Transverse colon (tissue), 4 donors: ENCODE measurements at regions of chr15 and their contacts with region 1.

Region 1: DNA sequence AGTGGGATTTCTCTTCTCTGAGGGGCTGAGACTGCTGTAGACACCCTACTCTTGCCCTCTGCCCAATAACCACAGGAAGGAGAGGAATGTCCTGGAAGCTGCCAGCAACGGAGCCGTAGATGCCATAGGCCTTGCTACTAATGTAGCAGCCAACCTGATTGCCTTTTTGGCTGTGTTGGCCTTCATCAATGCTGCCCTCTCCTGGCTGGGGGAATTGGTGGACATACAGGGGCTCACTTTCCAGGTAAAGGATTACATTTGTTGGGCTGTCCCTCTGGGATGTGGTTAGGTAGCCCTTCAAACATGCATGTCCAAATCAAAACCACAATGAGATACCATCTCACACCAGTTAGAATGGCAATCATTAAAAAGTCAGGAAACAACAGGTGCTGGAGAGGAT is 16.1 kb downstream of the SLC28A2 start:
- DNase-seq: peak; percentile 54
- H3K4me3 ChIP-seq: no peak overlapping the region
- H3K27ac ChIP-seq: no peak overlapping the region
- H3K4me1 ChIP-seq: no peaks in the 10 kb centered on the region
- H3K27me3 ChIP-seq: no peaks in the 10 kb centered on the region
- CTCF ChIP-seq: peak; percentile 8 to 46 (median 19)
- EP300 ChIP-seq: no peak
- POLR2A ChIP-seq: no peak

Region 2: GRCh38 chr15:45166834-45167630 is 101.1 kb before region 1 on chr15:
- in situ Hi-C with region 1: no loop called
- intact Hi-C with region 1: no loop called
- DNase-seq: peak; percentile 89
- H3K4me3 ChIP-seq: peak overlapping the region; percentile 47 to 78 (median 58)
- H3K27ac ChIP-seq: peak overlapping the region; percentile 94 to 99 (median 96)
- H3K4me1 ChIP-seq: peaks cover 10 to 21% (median 12%) of the 10 kb centered on the region in 4 donors
- H3K27me3 ChIP-seq: no peaks in the 10 kb centered on the region
- CTCF ChIP-seq: peak; percentile 68 to 89 (median 74)
- EP300 ChIP-seq: no peak
- POLR2A ChIP-seq: peak; percentile 67

Region 3: GRCh38 chr15:45212493-45212892 is 55.6 kb before region 1 on chr15:
- in situ Hi-C with region 1: loop called in 1 of 4 experiments (anchors 10 kb)
- intact Hi-C with region 1: no loop called
- DNase-seq: no peak
- H3K4me3 ChIP-seq: no peak overlapping the region
- H3K27ac ChIP-seq: no peak overlapping the region
- H3K4me1 ChIP-seq: peaks cover 0 to under 1% (median 0%) of the 10 kb centered on the region in 4 donors
- H3K27me3 ChIP-seq: no peaks in the 10 kb centered on the region
- CTCF ChIP-seq: no peak
- EP300 ChIP-seq: no peak
- POLR2A ChIP-seq: no peak